ENCODE measurements at regions of chr1 and their contacts with region 1.

Region 1: GRCh38 chr1:226121587-226122400 is 59.3 kb downstream of the H3-3A start:
- DNase-seq: peak; percentile 88
- CTCF ChIP-seq: peak; percentile 87

Region 2: DNA sequence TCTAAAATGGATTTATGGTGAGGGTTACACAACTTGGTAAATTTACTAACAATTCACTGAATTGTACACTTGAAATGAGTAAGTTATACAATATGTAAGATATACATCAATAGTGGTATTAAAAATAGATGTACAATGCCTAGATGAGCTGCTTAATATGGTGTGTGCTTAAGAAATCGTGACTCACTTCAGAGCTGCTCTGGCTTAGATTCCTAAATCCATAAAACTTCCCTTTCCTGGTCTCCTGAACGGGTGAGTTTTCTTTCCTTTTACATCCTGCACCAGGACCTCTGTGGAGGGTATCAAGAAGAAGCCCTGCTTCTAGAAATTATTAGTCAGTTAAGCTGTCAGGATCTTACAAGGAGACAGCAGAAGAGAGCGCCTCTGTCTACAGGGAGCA is 28.8 kb before region 1 on chr1:
- CTCF ChIA-PET with region 1: interaction called, 10 read pairs
- POLR2A ChIA-PET with region 1: interaction called, 6 read pairs
- DNase-seq: no peak
- CTCF ChIP-seq: no peak

Region 3: GRCh38 chr1:226135059-226135651 is 13.4 kb after region 1 on chr1:
- CTCF ChIA-PET with region 1: interaction called, 38 read pairs
- POLR2A ChIA-PET with region 1: no interaction called
- DNase-seq: no peak
- CTCF ChIP-seq: no peak

Region 4: DNA sequence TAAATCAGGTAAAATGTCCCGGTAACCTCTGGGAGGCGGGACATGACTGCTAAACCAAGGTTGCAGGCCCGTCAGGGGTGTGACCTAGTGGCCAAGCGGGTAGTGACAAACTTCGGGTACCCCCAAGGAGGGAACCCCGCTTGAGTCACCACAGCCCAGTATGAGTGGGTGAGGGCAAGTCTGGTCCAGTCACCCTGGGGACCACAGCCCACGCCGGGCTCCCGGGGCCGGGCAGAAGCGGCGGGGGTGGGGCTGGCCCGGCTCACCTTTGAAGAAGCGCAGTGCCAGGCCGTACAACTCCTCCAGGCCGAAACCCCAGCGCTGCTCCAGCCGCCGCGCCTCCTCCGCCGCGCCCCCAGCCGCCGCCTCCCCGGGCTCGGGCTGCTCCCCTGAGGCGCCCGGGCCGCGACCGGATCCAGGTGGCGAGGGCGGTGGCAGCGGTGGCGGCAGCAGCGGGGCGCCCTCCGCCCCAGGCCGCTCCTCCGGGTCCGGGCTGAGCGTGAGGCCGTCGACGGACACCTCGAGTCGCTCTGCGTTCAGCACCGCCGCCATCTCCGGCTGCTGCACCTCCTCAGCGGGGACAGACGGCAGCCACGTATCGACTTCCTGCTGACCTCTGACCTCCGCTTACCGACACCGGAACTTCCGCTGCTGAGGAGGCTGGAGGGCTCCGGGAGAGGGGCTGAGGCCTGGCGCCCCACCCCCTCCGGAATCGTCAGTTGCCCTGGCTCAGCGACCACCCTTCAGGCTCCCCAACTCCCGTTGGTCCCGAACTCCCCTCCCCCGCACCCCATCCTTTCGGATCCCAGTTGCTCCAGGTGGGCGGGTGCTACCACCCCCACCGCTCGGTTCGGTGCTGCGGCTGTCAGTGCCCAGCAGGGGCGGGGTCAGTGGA is 64.6 kb after region 1 on chr1 and contains the start of gene ACBD3:
- CTCF ChIA-PET with region 1: interaction called, 55 read pairs
- POLR2A ChIA-PET with region 1: no interaction called
- DNase-seq: peak; percentile 96
- CTCF ChIP-seq: no peak

Region 5: DNA sequence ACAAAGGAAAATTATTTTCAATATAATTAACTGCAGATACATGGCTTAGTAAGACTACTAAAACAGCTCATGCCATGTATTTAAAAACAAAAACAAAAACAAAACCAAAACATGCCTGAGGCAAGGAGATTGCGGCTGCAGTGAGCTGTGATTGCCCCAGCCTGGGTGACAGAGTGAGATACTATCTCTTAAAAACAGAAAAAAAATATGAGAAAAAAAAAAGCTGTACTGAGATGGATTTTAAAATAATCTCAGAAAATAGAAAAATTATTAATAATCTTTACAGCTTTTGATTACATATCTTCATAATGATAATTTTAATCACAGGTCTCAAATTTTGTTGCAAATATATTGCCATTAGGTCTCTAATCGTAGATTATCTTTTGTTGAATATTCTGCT is 211.2 kb after region 1 on chr1:
- CTCF ChIA-PET with region 1: interaction called, 26 read pairs
- POLR2A ChIA-PET with region 1: no interaction called
- DNase-seq: no peak
- CTCF ChIP-seq: no peak

Measured in GM10248 (cell line).